ENCODE measurements at regions of chr1 and their contacts with region 1.

Region 1: GRCh38 chr1:30379684-30380624 is 343.4 kb downstream of the MATN1 start:
- DNase-seq: no peak
- H3K4me3 Mint-ChIP-seq: no peak overlapping the region
- H3K27ac Mint-ChIP-seq: no peak overlapping the region
- H3K4me1 Mint-ChIP-seq: peaks cover 2% of the 10 kb centered on the region
- H3K27me3 Mint-ChIP-seq: peaks cover 2% of the 10 kb centered on the region

Region 2: DNA sequence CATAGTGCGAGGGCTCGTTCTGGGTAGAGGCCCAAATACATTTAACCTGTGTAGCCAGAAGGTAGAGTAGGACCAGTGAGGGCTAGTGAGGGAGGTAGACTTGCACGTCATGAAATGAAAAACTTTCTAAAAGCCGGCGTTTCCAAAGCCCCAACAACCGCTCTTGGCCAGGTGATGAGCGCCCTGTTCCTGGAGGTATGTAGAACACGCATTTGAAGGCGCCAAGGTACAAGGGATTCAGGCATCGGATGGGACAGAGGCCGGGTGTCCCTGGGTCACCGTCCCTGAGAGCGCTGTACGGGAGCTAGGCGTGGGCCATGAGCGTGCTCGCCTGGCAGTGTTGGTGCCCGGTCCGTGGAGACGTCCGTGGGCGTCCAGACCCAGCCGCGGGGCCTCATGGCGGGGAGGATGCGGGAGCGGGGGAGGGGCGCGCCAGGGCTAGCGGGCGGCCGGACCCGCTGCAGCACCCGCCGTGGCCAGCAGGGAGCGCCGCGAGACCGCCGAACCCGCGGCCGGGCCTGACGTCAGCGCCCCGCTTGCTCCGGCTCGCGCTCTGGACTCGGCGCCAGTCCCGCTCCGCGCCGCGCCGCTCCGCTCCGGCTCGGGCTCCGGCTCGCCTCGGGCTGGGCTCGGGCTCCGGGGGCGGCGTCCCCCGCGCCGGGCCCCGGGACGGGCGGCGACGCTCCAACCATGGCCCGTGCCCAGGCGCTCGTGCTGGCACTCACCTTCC is 1143.8 kb before region 1 on chr1 and contains the start of gene PTPRU:
- intact Hi-C with region 1: loop called (anchors 2 kb)
- DNase-seq: peak; percentile 78
- H3K4me3 Mint-ChIP-seq: peak within 1 kb of the TSS; percentile 76
- H3K27ac Mint-ChIP-seq: peak within 1 kb of the TSS; percentile 2
- H3K4me1 Mint-ChIP-seq: peaks cover 15% of the 10 kb centered on the region
- H3K27me3 Mint-ChIP-seq: peaks cover 52% of the 10 kb centered on the region
- total RNA-seq, gene PTPRU: 0.30 and 0.37 TPM in 2 replicates

Region 3: GRCh38 chr1:29379443-29380073 is 1000.4 kb before region 1 on chr1:
- intact Hi-C with region 1: loop called (anchors 5 kb)
- DNase-seq: no peak
- H3K4me3 Mint-ChIP-seq: no peak overlapping the region
- H3K27ac Mint-ChIP-seq: no peak overlapping the region
- H3K4me1 Mint-ChIP-seq: no peaks in the 10 kb centered on the region
- H3K27me3 Mint-ChIP-seq: peaks cover 15% of the 10 kb centered on the region

Region 4: GRCh38 chr1:30418081-30418938 is 38.4 kb after region 1 on chr1:
- intact Hi-C with region 1: no loop called
- DNase-seq: no peak
- H3K4me3 Mint-ChIP-seq: no peak overlapping the region
- H3K27ac Mint-ChIP-seq: no peak overlapping the region
- H3K4me1 Mint-ChIP-seq: no peaks in the 10 kb centered on the region
- H3K27me3 Mint-ChIP-seq: no peaks in the 10 kb centered on the region

Region 5: DNA sequence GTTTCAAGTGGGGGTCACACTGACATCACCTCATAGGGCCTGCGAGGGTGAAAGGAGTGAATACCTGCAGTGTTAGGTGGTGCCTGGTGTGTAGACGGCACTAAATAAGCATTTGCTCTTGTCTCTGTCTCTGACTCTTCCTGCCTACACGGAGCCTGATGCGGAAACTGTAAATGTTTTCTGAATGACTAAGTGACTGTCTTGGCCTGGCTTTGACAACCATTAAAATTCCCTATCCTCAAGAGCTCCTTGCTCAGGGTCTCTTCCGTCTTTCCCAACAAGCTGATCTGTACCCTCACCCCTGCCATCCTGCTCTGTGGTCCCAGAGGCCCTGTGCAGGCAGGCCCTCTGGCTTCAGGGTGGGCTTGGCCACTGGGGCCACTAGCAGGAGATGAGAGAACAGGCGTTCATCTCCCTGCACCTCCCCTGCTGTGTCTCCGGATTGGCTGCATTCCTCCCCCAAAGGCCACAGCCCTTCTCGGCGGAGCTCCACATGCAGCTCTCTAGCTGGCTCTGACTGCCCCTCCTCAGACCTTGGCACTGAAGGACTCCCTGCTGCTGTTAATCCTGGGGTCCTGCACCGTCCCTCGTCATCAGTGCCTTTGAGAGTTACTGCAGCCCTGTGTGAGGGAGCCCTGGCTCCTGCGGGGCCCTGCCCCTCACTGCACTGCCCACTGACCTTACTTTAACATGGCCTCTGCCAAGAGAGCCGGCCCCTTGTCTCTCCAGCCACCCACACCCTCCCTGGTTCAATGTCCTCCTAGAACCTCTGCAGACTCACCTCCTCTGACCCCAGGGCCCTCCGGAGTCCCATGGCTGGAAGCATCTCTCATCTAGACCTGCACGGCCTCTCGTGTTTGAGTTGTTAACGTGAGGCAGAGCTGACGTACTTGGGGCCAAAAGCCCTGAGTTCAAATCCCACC is 132.3 kb after region 1 on chr1:
- intact Hi-C with region 1: no loop called
- DNase-seq: no peak
- H3K4me3 Mint-ChIP-seq: no peak overlapping the region
- H3K27ac Mint-ChIP-seq: no peak overlapping the region
- H3K4me1 Mint-ChIP-seq: no peaks in the 10 kb centered on the region
- H3K27me3 Mint-ChIP-seq: no peaks in the 10 kb centered on the region

Region 6: GRCh38 chr1:30707412-30708360 is 327.7 kb after region 1 on chr1:
- intact Hi-C with region 1: loop called (anchors 10 kb)
- DNase-seq: peak; percentile 33
- H3K4me3 Mint-ChIP-seq: no peak overlapping the region
- H3K27ac Mint-ChIP-seq: no peak overlapping the region
- H3K4me1 Mint-ChIP-seq: no peaks in the 10 kb centered on the region
- H3K27me3 Mint-ChIP-seq: peaks cover 4% of the 10 kb centered on the region

Measured in activated T-helper 2 cell treated with anti-CD3 and anti-CD28 coated beads, Interferon-gamma antibody, Interleukin-2, Interleukin-4, amounts not matched to agents 10 μg/mL and 5 μg/mL and 100 μg/mL, durations not matched to agents 14 hours and 24 hours and 36 hours (primary cell).